ENCODE measurements at regions of chr13 and their contacts with region 1.

Region 1: GRCh38 chr13:52128714-52129700 is at the start of gene NEK5:
- DNase-seq: peak; percentile 62
- H3K4me3 ChIP-seq: peak within 1 kb of the TSS; percentile 50 to 60
- H3K27ac ChIP-seq: peak within 1 kb of the TSS; percentile 18 to 40
- H3K4me1 ChIP-seq: no peaks in the 10 kb centered on the region
- H3K27me3 ChIP-seq: no peaks in the 10 kb centered on the region
- CTCF ChIP-seq: peak; percentile 53 to 77 (median 73)
- POLR2A ChIP-seq: no peak
- total RNA-seq, gene NEK5: 1.2 to 2.3 TPM

Region 2: GRCh38 chr13:51125498-51126226 is 1003.3 kb before region 1 on chr13:
- intact Hi-C with region 1: loop called (anchors 10 kb)
- DNase-seq: peak; percentile 45
- H3K4me3 ChIP-seq: no peak overlapping the region
- H3K27ac ChIP-seq: no peak overlapping the region
- H3K4me1 ChIP-seq: no peaks in the 10 kb centered on the region
- H3K27me3 ChIP-seq: no peaks in the 10 kb centered on the region
- CTCF ChIP-seq: peak; percentile 26 to 67 (median 56)
- POLR2A ChIP-seq: no peak

Region 3: GRCh38 chr13:51814825-51815650 is 314.0 kb before region 1 on chr13:
- intact Hi-C with region 1: loop called (anchors 10 kb)
- DNase-seq: peak; percentile 55
- H3K4me3 ChIP-seq: no peak overlapping the region
- H3K27ac ChIP-seq: no peak overlapping the region
- H3K4me1 ChIP-seq: no peaks in the 10 kb centered on the region
- H3K27me3 ChIP-seq: no peaks in the 10 kb centered on the region
- CTCF ChIP-seq: peak; percentile 44 to 82 (median 75)
- POLR2A ChIP-seq: no peak

Region 4: DNA sequence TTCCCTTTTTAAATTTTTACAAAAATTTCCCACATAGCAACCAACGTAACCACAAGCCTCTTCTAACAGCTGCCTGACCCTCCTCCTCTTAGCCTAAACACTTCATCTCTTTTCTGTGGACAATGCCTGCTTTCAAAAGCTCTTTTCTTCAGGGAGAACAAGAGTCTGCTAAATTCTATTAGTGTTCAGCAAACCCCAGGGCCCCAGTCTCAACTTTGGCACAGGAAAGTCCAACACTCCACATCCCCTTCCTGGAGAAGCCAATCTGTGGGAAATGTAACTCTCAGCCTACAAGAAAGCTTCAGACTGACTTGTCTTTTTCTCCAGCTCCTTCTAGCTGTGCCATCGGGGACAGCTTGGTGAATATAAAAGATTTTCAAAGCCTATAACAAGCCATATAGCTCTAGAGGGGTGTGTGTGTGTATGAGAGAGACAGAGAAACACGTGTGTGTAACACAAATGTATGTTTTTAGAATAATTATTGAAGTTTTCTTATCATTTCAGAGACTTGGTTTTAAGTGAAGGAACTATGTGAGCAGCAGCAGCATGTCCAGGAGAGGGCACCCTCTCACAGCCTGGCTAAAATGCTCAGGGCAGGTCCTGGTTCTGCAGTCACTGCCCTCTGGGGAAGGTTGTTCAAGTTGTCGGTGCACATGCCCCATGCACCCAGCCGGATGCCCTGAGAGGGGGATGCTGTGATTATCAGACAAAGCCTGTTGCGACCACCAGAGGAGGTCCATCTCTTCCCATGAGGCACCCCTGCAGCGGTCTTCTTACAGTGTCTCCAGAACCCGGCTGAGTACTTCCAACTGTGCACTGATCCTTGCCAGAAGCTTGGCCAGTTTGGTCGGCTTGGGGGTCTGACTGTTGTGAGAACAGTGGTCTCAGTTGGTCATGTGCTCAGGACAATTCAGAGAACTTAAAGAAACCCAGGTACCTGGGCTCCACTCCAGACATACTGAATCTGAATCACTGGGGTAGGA is 232.8 kb before region 1 on chr13:
- intact Hi-C with region 1: loop called (anchors 5 kb)
- DNase-seq: peak; percentile 22
- H3K4me3 ChIP-seq: no peak overlapping the region
- H3K27ac ChIP-seq: no peak overlapping the region
- H3K4me1 ChIP-seq: no peaks in the 10 kb centered on the region
- H3K27me3 ChIP-seq: no peaks in the 10 kb centered on the region
- CTCF ChIP-seq: peak in 3 of 4 experiments; percentile 39 to 63 (median 58)
- POLR2A ChIP-seq: no peak

Region 5: DNA sequence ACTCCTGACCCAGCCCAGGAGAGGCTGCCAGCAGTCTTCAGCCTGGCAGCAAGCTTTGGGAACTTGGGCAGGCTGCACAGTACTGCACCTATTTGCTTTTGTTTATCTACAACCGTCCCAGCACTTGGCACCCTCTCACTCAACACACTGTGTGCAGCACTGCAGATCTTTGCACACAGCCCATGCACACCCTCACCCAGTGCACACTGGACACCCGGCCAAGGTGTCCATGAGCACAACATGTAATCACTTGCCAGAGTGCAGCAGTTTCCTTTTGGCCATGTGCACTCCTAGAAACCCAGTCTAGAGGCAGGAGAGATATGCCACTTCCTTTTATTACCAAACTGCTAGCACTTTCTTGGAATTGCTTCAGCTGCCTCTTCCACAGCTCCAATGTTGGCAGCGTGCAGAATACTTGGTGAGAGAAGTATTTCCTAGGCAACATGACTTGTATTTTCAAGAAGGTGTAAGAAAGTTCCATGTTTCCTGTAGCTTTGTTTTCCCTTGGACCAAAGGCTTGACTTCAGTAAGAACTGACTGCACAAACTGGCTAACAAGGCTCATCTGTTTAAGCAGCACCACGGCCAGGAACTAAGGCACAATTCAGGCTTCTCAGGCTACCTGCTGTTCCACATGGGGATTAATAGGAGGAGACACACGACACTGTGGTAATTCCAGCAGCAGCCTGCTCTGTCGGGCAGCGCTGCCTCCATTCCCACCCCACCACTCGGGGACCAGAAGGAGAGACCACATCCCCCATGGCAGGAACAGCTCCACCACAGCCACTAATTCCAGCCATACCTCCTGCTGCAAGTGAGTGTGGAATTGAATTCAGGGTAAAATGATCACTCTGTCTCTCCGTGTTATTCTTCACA is 133.1 kb before region 1 on chr13:
- intact Hi-C with region 1: loop called (anchors 5 kb)
- DNase-seq: peak; percentile 43
- H3K4me3 ChIP-seq: no peak overlapping the region
- H3K27ac ChIP-seq: peak overlapping the region; percentile 50 to 56
- H3K4me1 ChIP-seq: peaks cover 17% of the 10 kb centered on the region
- H3K27me3 ChIP-seq: no peaks in the 10 kb centered on the region
- CTCF ChIP-seq: peak in 1 of 4 experiments; percentile 12
- POLR2A ChIP-seq: no peak

Region 6: DNA sequence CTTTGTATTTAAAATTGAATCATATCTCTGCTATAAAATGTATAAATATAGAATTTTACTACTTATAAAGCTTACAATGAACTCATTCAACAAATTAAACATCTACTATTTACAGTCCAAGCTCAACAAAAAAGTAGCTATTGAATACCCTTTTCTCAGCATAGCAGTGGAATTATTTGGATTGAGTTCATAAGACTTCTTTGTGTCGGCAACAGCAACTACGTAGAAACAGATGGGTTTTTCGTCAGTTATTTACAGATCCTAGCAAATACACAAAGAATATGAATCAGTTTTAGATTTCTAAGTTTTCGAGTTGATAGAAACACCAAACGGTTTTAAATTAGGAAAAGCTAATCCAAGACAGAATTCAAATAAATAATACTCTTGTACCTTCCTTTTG is 40.8 kb after region 1 on chr13:
- intact Hi-C with region 1: no loop called
- DNase-seq: no peak
- H3K4me3 ChIP-seq: no peak overlapping the region
- H3K27ac ChIP-seq: peak overlapping the region in 1 of 2 donors; percentile 24
- H3K4me1 ChIP-seq: no peaks in the 10 kb centered on the region
- H3K27me3 ChIP-seq: no peaks in the 10 kb centered on the region
- CTCF ChIP-seq: no peak
- POLR2A ChIP-seq: no peak

Region 7: GRCh38 chr13:52450012-52450792 is 321.2 kb after region 1 on chr13 and contains the start of gene VPS36:
- intact Hi-C with region 1: no loop called
- DNase-seq: peak; percentile 96
- H3K4me3 ChIP-seq: peak within 1 kb of the TSS; percentile 92 to 94
- H3K27ac ChIP-seq: peak within 1 kb of the TSS; percentile 89 to 96
- H3K4me1 ChIP-seq: peaks cover 2% of the 10 kb centered on the region
- H3K27me3 ChIP-seq: no peaks in the 10 kb centered on the region
- CTCF ChIP-seq: peak; percentile 99 to 100 (median 100)
- POLR2A ChIP-seq: peak; percentile 76
- total RNA-seq, gene VPS36: 43.9 to 46.6 TPM

Region 8: GRCh38 chr13:52461265-52461664 is 332.3 kb after region 1 on chr13:
- intact Hi-C with region 1: no loop called
- DNase-seq: no peak
- H3K4me3 ChIP-seq: no peak overlapping the region
- H3K27ac ChIP-seq: no peak overlapping the region
- H3K4me1 ChIP-seq: no peaks in the 10 kb centered on the region
- H3K27me3 ChIP-seq: no peaks in the 10 kb centered on the region
- CTCF ChIP-seq: no peak
- POLR2A ChIP-seq: no peak